Ascending aorta (tissue), 2 donors: ENCODE measurements at regions of chr7 and their contacts with region 1.

Region 1: GRCh38 chr7:92134271-92135051 is at the start of gene CYP51A1:
- DNase-seq: peak; percentile 77 to 97
- H3K4me3 ChIP-seq: peak within 1 kb of the TSS; percentile 67 to 88
- H3K27ac ChIP-seq: peak within 1 kb of the TSS; percentile 92 to 93
- H3K4me1 ChIP-seq: peaks cover 0 to 10% of the 10 kb centered on the region in 2 donors
- H3K27me3 ChIP-seq: no peaks in the 10 kb centered on the region
- CTCF ChIP-seq: no peak
- total RNA-seq, gene CYP51A1: 19.9 TPM

Region 2: GRCh38 chr7:92178927-92179924 is 44.8 kb after region 1 on chr7 and contains the start of gene LRRD1:
- intact Hi-C with region 1: loop called (anchors 2 kb)
- DNase-seq: peak; percentile 46 to 92
- H3K4me3 ChIP-seq: peak within 1 kb of the TSS; percentile 55 to 68
- H3K27ac ChIP-seq: peak within 1 kb of the TSS; percentile 72 to 73
- H3K4me1 ChIP-seq: peaks cover 0 to 4% of the 10 kb centered on the region in 2 donors
- H3K27me3 ChIP-seq: no peaks in the 10 kb centered on the region
- CTCF ChIP-seq: peak; percentile 80 to 98 (median 96)
- total RNA-seq, gene LRRD1: not detected

Region 3: GRCh38 chr7:92245487-92246362 is 111.3 kb after region 1 on chr7 and contains the starts of genes ANKIB1 and KRIT1:
- intact Hi-C with region 1: loop called (anchors 1 kb)
- DNase-seq: peak; percentile 36 to 94
- H3K4me3 ChIP-seq: peak within 1 kb of the TSS; percentile 80 to 99
- H3K27ac ChIP-seq: peak within 1 kb of the TSS; percentile 90 to 94
- H3K4me1 ChIP-seq: peaks cover 0 to 25% of the 10 kb centered on the region in 2 donors
- H3K27me3 ChIP-seq: no peaks in the 10 kb centered on the region
- CTCF ChIP-seq: peak in 2 of 3 experiments; percentile 4 to 14
- total RNA-seq, gene ANKIB1: 27.4 TPM
- total RNA-seq, gene KRIT1: 66.1 TPM